ENCODE measurements at regions of chr10 and their contacts with region 1.

Region 1: GRCh38 chr10:24642622-24643417 is 80.9 kb downstream of the ARHGAP21 start:
- DNase-seq: no peak
- H3K4me3 ChIP-seq: no peak overlapping the region
- H3K27ac ChIP-seq: no peak overlapping the region
- H3K4me1 ChIP-seq: peaks cover 0 to 64% (median 10%) of the 10 kb centered on the region in 4 donors
- H3K27me3 ChIP-seq: no peaks in the 10 kb centered on the region
- CTCF ChIP-seq: peak; percentile 77 to 79

Region 2: GRCh38 chr10:24706479-24707118 is 63.8 kb after region 1 on chr10:
- intact Hi-C with region 1: no loop called
- DNase-seq: peak in 1 of 2 donors; percentile 56
- H3K4me3 ChIP-seq: no peak overlapping the region
- H3K27ac ChIP-seq: no peak overlapping the region
- H3K4me1 ChIP-seq: peaks cover 0 to 80% (median 19%) of the 10 kb centered on the region in 4 donors
- H3K27me3 ChIP-seq: no peaks in the 10 kb centered on the region
- CTCF ChIP-seq: no peak

Region 3: GRCh38 chr10:24929056-24929544 is 286.3 kb after region 1 on chr10:
- intact Hi-C with region 1: no loop called
- DNase-seq: no peak
- H3K4me3 ChIP-seq: no peak overlapping the region
- H3K27ac ChIP-seq: no peak overlapping the region
- H3K4me1 ChIP-seq: peaks cover 0 to 15% (median 9%) of the 10 kb centered on the region in 4 donors
- H3K27me3 ChIP-seq: no peaks in the 10 kb centered on the region
- CTCF ChIP-seq: no peak

Region 4: DNA sequence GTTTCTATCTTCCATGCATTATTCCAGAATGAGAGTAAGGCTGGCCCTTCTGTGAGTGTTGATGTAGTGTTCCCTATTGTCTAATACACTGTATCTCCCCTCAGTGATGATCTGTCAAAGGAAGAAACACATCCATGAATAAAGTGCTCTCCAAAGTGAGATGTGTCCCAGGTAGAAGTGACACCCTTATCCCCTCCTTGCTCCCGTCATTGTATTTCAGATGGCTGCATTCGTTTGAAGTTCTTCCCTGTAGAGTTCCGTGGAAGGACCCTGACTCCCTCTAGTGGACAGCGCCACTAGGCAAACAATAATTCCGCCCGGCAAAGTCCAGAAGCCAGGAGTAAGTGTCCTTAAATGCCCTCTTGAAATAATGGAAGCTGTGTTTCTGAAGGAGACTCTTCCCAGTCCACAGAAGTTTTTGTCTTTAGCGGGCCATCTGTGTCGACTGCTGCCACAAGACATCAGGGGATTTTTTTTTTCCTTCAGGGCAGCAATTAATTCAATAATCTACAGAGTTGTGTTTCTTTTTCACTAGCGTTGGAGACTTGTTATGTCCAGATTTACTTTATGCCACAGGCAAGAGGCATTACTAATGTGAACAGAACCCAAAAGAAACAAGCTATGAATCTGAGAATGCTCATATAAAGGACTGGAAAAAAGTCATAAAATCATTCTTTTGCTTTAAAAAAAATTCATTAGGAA is 438.2 kb after region 1 on chr10:
- intact Hi-C with region 1: loop called (anchors 5 kb)
- DNase-seq: peak; percentile 78 to 90
- H3K4me3 ChIP-seq: peak overlapping the region in 1 of 2 donors; percentile 15
- H3K27ac ChIP-seq: peak overlapping the region; percentile 31 to 34
- H3K4me1 ChIP-seq: peaks cover 0 to 23% (median 9%) of the 10 kb centered on the region in 4 donors
- H3K27me3 ChIP-seq: no peaks in the 10 kb centered on the region
- CTCF ChIP-seq: peak; percentile 81 to 87